Cardiac septum (tissue), 1 donor: ENCODE measurements at regions of chr2 and their contacts with region 1.

Region 1: GRCh38 chr2:64144057-64145013 is at the start of gene PELI1:
- DNase-seq: peak; percentile 98
- total RNA-seq, gene PELI1: 9.0 TPM

Region 2: DNA sequence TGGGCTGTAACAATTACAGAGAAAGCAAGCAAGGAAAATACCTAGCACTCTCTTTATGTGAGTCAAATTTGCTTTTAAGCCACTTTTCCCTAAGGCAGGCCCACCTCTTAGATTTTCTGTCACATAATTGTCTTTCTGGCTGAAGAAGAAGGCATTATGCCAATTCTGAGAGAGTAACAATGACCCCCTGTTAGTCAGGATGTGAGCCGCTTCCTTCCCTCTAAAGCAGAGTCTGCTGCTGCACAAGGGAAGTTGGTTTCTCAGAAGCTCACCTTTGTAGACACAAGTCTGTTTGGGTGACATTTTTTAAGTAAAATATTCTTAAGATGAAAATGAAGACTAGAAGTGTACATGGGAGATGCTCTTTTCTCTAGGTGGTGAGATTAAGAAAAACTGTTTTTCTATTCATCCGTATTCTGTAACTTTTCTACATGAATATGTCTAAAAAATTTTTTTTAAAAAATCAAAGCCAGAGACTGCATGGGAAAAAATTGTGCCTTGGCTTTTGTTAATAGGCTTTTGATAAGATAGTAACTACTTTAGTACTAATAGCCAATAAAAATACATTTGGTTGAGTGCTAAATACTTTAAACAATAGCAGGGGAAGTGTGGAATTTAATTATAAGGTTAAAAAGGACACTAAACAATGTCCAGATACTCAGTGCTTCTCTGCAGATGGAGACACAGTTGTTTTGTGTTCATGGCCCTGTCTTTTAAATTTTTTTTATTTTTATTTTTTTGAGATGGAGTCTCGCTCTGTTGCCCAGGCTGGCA is 91.7 kb before region 1 on chr2:
- intact Hi-C with region 1: loop called (anchors 1 kb)
- DNase-seq: no peak

Region 3: DNA sequence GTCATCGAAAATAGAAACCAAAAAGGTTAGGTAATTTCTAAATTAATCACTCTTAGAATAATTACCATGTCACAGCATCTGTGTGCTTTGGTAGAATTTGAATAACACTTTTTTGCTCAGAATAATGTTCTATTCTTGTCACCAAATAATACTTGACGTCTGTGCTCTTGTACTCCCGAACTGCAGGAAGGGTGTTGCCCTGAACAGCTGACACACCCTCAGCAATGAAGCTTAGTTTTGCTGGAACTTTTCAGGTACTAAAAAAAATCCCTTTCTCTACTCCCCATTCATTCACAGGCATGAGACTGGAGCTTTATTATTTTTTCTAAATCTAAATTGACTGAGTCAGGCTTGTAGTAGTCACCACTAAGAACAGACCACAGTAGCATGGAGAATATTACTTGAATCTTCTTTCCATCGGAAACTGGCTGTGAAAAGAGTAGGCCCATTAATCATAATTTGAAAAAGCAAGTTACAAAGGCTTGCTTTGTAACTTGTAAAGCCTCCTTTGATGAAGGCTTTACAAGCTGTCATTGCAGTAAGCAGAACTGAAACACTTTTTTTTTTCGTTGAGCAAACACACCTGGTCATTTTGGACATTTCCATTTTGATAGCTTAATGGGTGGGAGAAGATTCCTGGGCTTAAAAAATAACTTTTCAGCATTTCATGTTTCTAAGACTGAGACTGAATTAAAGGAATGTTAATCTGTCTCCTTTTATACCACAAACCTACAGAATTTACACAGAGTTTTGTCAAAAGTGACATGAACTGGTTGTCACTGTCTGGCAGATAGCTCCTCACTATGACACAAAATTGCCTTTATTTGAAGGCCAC is 70.2 kb after region 1 on chr2:
- intact Hi-C with region 1: loop called (anchors 5 kb)
- DNase-seq: no peak

Region 4: DNA sequence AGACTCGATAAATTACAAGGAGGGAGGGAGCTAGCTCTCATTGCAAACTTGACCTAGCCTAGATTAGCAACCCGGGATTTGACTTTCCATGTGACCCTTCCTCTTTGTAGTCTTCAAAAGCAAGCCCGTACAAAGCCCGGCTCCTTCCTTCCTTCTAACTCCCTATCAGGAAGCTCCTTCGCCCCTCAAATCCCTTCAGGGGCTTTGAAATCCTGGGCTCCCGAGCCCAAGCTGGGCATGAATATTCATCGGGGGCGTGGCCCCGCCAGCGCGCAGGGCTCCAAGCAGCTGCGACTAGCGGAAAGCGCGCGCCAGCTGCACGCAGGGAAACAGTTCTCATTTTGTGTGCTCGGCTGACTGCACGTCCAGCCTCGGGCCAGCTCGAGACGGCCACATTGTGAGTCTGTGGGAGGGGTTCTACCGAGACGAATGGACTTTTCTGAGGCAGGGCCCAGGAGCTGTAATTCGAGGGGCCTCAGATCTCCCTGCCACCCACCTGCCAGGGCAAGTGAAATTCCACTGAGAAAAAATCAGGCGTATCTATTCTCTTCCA is 83.9 kb after region 1 on chr2:
- intact Hi-C with region 1: loop called (anchors 5 kb)
- DNase-seq: peak; percentile 95

Region 5: DNA sequence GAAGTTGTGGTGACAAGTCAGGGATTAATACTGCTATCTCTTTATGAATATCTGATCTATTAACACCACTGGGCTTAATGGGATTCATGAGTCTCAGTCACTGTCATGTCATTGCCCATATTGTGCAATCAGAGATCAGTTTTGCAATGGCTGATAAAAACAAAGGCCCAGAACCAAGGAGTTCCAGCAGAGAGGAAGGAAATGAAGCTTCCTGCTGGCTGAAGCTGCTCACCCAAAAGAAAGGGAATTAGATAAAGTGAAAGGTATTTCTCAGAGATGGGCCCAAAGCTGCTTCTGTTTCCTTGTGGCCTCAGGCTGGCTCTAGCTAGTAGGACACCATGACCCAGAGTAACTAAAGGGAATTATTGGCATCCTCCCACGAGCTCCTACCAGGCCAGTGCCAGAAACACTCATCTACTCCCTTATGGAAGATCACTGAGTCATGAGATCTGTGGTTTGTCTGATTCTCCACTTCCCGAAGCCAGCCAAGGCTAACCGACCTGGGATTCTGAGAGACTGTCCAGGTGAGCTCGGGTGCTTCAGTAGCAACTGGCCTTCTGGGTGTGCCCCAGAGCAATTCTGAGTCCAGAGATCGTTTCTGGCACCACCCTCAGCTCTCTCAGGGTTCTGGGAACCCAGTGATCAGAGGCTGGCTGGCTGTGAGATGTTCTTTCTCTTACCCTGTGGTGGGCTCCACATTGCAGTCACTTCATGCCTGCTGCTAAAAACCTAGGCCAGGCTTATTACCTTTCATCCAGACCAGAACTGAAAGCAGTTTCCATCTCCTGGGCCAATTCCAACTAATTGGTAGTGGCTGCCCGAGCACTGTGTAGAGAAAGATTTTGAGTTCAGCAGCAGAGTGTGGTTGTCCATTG is 129.4 kb after region 1 on chr2:
- intact Hi-C with region 1: loop called (anchors 5 kb)
- DNase-seq: no peak